ENCODE measurements at regions of chr12 and their contacts with region 1.

Region 1: DNA sequence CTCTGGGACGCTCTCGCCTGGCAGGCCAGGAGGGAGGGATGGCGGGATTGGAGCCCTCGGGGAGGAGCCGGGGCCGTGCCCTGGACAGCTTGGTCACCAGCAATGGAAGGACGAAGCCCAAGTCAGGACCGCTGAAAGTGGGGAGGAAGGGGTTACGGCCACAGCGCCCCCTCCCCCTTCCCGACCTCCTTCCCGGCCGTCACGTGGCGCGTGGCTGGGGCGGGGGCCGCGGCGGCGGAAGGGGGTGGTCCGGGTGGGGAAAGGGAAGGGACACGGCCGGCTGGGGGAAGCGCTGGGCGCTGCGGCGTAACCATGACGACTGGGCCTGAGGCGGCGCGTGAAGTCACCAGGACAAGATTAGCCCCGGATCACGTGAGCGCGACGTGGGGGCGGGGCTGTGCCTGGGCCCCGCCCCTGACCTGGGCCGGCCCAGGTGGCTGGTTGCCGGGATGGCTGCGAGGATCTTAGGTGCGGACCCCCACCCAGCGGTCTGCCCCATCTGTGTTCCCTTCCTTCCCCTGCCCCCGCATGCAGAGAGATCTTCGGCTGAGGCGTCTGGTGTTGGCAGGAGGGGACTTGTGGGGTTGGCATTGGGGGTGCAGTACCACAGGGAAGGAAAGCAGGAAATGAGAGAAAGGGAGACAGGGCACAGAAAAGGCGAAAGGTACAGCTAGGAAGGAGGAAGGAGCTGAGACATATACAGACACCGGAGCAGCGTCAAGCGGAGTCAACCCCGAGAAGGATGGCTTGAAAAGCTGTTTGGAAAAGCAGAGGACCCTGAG is 6.2 kb downstream of the MAP3K12 start:
- DNase-seq: peak; percentile 90
- H3K4me3 Mint-ChIP-seq: peak overlapping the region; percentile 88
- H3K27ac Mint-ChIP-seq: peak overlapping the region; percentile 81
- H3K4me1 Mint-ChIP-seq: peaks cover 26% of the 10 kb centered on the region
- H3K27me3 Mint-ChIP-seq: no peaks in the 10 kb centered on the region

Region 2: DNA sequence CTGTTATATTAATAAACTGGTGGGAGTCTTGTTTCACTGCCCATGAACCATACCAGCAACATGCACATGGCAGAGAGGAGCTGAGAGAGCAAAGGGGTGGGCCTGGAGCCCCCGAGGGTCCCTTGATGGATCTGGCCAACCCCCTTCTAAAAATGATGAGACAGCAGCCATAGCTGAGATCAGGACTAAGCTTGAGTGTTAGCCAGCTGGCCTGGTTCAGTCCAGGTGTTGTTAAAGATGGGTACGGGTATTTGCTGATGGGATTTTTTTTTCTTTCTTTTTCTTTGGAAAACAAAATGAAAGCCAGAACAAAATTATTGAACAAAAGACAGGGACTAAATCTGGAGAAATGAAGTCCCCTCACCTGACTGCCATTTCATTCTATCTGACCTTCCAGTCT is 25.1 kb before region 1 on chr12:
- CTCF ChIA-PET with region 1: no interaction called
- intact Hi-C with region 1: no loop called
- DNase-seq: no peak
- H3K4me3 Mint-ChIP-seq: no peak overlapping the region
- H3K27ac Mint-ChIP-seq: peak overlapping the region; percentile 74
- H3K4me1 Mint-ChIP-seq: peaks cover 39% of the 10 kb centered on the region
- H3K27me3 Mint-ChIP-seq: no peaks in the 10 kb centered on the region

Region 3: GRCh38 chr12:53481957-53482586 is 10.9 kb before region 1 on chr12:
- CTCF ChIA-PET with region 1: interaction called, 16 read pairs
- intact Hi-C with region 1: no loop called
- DNase-seq: no peak
- H3K4me3 Mint-ChIP-seq: no peak overlapping the region
- H3K27ac Mint-ChIP-seq: peak overlapping the region; percentile 54
- H3K4me1 Mint-ChIP-seq: peaks cover 4% of the 10 kb centered on the region
- H3K27me3 Mint-ChIP-seq: no peaks in the 10 kb centered on the region

Measured in activated naive CD4-positive, alpha-beta T cell treated with anti-CD3 and anti-CD28 coated beads for 36 hours (primary cell).